Posterior vena cava (tissue), 2 donors: ENCODE measurements at regions of chr12 and their contacts with region 1.

Region 1: GRCh38 chr12:130044991-130045621 is 117.2 kb upstream of the FZD10 start:
- DNase-seq: no peak

Region 2: GRCh38 chr12:130335517-130336392 is 290.6 kb after region 1 on chr12:
- intact Hi-C with region 1: loop called (anchors 5 kb)
- DNase-seq: no peak